Panc1 (cell line): ENCODE measurements at regions of chr2 and their contacts with region 1.

Region 1: DNA sequence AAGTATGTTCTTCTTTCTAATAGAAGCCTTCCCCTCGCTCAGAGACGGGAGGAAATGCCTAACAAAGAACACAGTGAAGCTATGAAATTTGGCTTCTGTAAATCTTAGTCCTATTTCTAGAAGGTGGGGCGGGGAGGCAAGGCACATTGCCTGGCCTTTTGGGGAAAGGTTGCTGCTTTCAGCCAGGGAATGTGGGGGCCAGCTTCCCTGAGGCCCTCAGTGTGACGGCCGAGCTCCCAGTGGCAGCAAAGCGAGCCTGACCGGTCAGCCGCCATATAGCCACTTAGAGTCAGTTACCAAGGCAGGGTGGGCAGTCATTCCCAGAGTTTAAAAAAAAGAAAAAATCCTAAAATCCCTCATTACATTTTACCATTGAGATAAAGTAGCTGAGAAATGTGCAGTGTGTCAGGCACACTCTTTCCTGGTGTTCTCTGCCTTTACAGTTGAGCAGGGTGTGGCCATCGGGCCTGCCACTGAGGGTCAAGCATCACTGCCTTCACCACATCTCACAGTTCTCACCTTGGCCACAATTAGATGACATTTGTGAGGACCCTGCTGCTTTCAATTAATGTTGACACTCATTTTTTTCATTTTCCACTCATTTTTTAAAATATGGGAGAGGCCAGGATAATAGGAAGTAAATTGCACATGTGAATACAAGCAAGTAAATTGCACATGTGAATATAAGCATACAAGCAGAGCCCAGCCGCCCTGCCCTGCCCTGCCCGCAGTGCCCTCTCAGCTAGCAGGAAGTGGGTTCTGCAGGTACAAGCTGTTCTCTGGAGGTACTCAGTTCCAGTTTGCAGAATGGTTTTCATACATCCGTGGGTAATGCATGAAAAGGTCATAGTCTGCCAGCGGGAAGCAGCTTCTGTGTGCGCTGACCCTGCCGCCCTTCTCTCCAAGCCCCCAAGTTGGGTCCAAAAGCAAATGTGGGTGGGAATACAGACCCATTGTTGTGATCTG is 76.9 kb downstream of the WDSUB1 start:
- DNase-seq: no peak
- ATAC-seq: no peak
- H3K4me3 ChIP-seq: no peak overlapping the region
- H3K27ac ChIP-seq: no peak overlapping the region
- H3K4me1 ChIP-seq: no peaks in the 10 kb centered on the region; the same call in 1 of the 2 replicates
- H3K27me3 ChIP-seq: no peaks in the 10 kb centered on the region
- CTCF ChIP-seq: no peak

Region 2: DNA sequence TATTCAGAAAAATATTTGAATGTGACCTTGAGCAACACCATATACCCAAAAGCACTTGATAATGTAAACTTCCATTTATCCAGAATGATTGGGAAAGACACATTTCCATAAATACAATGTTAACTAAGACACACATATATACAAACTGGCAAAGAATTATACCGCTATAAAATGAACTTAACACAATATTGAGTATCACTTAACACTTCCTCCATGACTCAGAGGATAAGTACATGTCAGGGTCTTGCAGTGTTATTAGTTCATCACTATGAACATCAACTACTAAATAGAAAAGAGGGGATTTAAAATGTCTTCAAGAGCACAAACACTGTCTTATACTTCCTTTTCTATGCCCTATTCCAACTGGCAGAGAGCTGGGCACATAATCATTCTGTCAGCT is 58.3 kb after region 1 on chr2:
- CTCF ChIA-PET with region 1: no interaction called
- POLR2A ChIA-PET with region 1: no interaction called
- in situ Hi-C with region 1: no loop called
- intact Hi-C with region 1: no loop called
- DNase-seq: no peak
- ATAC-seq: no peak
- H3K4me3 ChIP-seq: no peak overlapping the region
- H3K27ac ChIP-seq: no peak overlapping the region
- H3K4me1 ChIP-seq: no peaks in the 10 kb centered on the region
- H3K27me3 ChIP-seq: no peaks in the 10 kb centered on the region
- CTCF ChIP-seq: no peak

Region 3: DNA sequence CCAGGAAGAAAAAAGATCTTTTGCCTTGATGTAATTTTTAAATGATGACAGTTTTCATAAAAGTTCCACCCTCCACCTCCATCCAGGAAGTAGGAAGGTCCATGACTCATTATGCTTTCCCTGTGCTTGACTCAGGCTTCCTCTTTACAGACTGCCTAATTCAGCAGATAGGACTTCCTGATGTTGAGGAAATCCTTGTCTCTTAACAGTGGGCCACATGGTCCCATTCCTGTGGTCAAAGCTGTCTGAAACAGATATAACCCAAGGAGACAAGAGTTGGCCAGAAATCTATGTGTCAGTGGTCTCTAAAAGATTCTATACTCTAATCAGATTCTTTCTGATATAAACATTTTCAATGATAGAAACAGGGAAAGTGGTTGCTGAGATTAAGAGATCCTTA is 287.6 kb after region 1 on chr2:
- CTCF ChIA-PET with region 1: no interaction called
- POLR2A ChIA-PET with region 1: no interaction called
- in situ Hi-C with region 1: no loop called
- intact Hi-C with region 1: no loop called
- DNase-seq: no peak
- ATAC-seq: peak; percentile 83
- H3K4me3 ChIP-seq: no peak overlapping the region
- H3K27ac ChIP-seq: no peak overlapping the region
- H3K4me1 ChIP-seq: no peaks in the 10 kb centered on the region
- H3K27me3 ChIP-seq: no peaks in the 10 kb centered on the region
- CTCF ChIP-seq: no peak

Region 4: GRCh38 chr2:159890551-159891266 is 681.1 kb after region 1 on chr2:
- CTCF ChIA-PET with region 1: no interaction called
- POLR2A ChIA-PET with region 1: interaction called, 10 read pairs
- in situ Hi-C with region 1: no loop called
- intact Hi-C with region 1: no loop called
- DNase-seq: no peak
- ATAC-seq: no peak; the same call in 1 of the 2 replicates
- H3K4me3 ChIP-seq: no peak overlapping the region
- H3K27ac ChIP-seq: no peak overlapping the region
- H3K4me1 ChIP-seq: no peaks in the 10 kb centered on the region
- H3K27me3 ChIP-seq: peaks cover 11% of the 10 kb centered on the region
- CTCF ChIP-seq: no peak